ENCODE measurements at regions of chr3 and their contacts with region 1.

Region 1: DNA sequence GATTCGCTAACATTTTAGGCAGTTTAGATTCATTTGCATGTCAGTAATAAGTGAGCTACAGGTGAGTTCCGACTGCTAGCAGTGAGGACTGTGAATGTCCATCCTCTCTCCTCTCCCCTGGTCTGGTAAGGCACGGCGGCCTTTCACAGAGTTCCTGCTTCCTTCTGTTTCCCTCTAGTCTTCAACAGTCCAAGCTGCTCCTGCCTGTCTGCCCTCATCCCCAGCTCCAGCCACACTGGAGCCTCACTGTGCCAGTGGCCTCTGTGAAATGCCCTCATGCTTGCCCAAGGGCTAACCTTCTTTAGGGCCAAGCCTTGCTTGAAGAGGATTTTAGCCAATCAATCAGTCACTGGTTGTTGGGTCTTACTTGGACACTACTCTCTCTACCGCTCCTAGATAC is 145.8 kb upstream of the BHLHE40 start:
- DNase-seq: no peak
- H3K4me3 ChIP-seq: no peak overlapping the region
- H3K27ac ChIP-seq: no peak overlapping the region
- H3K4me1 ChIP-seq: peaks cover 1% of the 10 kb centered on the region
- H3K27me3 ChIP-seq: no peaks in the 10 kb centered on the region
- CTCF ChIP-seq: no peak
- EP300 ChIP-seq: no peak
- POLR2A ChIP-seq: no peak

Region 2: GRCh38 chr3:4864503-4864902 is 31.0 kb after region 1 on chr3:
- intact Hi-C with region 1: loop called in 1 of 4 experiments (anchors 2 kb)
- DNase-seq: no peak
- H3K4me3 ChIP-seq: no peak overlapping the region
- H3K27ac ChIP-seq: no peak overlapping the region
- H3K4me1 ChIP-seq: peaks cover 6% of the 10 kb centered on the region
- H3K27me3 ChIP-seq: no peaks in the 10 kb centered on the region
- CTCF ChIP-seq: no peak
- EP300 ChIP-seq: no peak
- POLR2A ChIP-seq: no peak

Region 3: GRCh38 chr3:4907643-4908432 is 74.4 kb after region 1 on chr3:
- intact Hi-C with region 1: no loop called
- DNase-seq: no peak
- H3K4me3 ChIP-seq: no peak overlapping the region
- H3K27ac ChIP-seq: no peak overlapping the region
- H3K4me1 ChIP-seq: no peaks in the 10 kb centered on the region
- H3K27me3 ChIP-seq: no peaks in the 10 kb centered on the region
- CTCF ChIP-seq: no peak
- EP300 ChIP-seq: no peak
- POLR2A ChIP-seq: no peak

Measured in ovary (tissue), 10 donors.